Naive thymus-derived CD4-positive, alpha-beta T cell (primary cell): ENCODE measurements at regions of chr12 and their contacts with region 1.

Region 1: DNA sequence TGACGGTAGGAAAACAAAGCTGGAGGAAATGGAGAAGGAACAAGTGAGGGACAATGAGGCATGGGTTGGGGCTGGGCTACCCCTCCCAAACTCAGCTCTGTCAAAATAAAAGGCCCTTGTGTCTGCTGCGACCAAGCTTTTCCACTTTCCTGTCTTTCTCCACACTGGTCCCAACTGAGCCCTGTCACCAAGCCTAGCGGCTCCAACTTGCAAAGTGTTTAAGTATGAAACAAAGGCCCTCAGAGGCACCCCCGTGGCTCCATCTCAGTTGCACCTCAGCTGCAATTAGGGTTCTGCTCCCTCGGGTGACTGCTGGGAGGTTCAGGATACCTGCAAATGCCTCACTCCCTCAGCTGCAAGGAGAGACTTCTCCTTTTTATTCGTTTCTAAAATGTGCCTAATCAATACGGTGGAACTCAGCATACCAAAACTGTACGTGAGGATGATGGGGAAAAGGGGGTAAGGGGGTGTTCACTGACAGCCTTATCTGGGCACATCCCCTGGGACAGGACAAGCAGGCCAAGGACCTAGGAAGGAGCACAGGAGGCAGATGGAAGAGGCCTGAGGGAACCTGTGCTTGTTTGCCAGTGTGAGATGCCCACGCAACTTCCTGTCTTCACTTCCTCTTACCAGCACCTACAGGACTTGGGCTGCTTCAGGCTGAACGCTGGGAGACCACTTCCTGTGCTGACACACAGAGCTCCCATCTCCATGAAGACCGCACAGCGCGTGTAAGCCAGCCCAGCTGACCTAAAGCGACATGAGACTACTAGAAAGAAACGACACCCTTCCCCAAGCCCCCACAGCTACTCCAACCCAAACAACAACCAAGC is 8.9 kb downstream of the VAMP1 start:
- DNase-seq: peak; percentile 41 to 91 (median 87)
- ATAC-seq: peak; percentile 93
- H3K4me3 ChIP-seq: peak overlapping the region; percentile 54
- H3K4me3 Mint-ChIP-seq: peak overlapping the region; percentile 74 to 89 (median 85)
- H3K27ac ChIP-seq: peak overlapping the region; percentile 93
- H3K27ac Mint-ChIP-seq: peak overlapping the region; percentile 95 to 99 (median 98)
- H3K4me1 ChIP-seq: peaks cover 59 to 81% of the 10 kb centered on the region in 2 donors
- H3K4me1 Mint-ChIP-seq: peaks cover 66 to 95% (median 87%) of the 10 kb centered on the region in 7 donors
- H3K27me3 ChIP-seq: no peaks in the 10 kb centered on the region
- H3K27me3 Mint-ChIP-seq: no peaks in the 10 kb centered on the region

Region 2: DNA sequence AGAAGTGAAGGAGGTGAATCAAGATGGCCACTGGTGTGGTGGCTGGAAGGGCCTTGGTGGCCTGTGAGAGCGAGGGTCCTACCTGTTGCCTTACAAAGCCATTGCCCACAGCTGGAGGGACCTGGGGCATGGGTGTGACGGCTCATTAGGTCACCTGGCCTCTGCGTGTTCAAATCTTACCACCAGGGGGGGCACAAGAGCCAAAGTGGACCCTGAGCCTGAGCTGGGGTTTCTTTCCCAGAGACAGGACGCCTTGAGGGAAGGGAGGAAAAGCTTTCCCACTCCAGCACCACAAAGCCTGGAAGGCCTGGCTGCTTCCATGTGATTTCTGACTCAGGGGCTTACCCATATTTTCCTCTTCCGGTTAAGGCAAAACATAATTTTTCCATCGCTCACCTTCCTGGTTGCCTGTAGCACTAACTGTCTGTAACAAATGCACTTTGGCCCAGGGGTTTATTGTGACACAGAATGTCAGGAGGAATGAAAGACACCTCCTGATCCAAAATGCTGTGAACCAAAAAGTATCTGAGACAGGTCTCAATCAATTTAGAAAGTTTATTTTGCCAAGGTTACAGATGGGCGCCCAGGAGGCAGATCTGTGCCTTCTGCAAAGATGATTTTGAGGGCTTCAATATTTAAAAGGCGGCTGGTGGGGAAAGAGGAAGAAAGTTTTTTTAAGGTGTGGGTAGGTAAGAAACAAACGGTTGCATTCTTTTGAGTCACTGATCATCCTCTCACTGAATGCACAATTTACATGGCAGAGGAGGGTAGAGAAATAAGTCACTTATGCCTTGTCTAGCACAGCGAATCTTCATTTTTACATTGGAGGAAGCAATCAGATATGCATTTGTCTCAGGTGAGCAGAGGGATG is 265.7 kb before region 1 on chr12:
- CTCF ChIA-PET with region 1: no interaction called
- POLR2A ChIA-PET with region 1: no interaction called
- intact Hi-C with region 1: no loop called
- DNase-seq: peak; percentile 42 to 80 (median 64)
- ATAC-seq: peak; percentile 75
- H3K4me3 ChIP-seq: no peak overlapping the region
- H3K4me3 Mint-ChIP-seq: no peak overlapping the region
- H3K27ac ChIP-seq: no peak overlapping the region
- H3K27ac Mint-ChIP-seq: peak overlapping the region in 3 of 9 donors; percentile 16 to 50 (median 19)
- H3K4me1 ChIP-seq: no peaks in the 10 kb centered on the region
- H3K4me1 Mint-ChIP-seq: peaks cover 5 to 21% (median 9%) of the 10 kb centered on the region in 7 donors
- H3K27me3 ChIP-seq: peaks cover 0 to 3% of the 10 kb centered on the region in 2 donors
- H3K27me3 Mint-ChIP-seq: peaks cover 0 to 37% (median under 1%) of the 10 kb centered on the region in 5 donors

Region 3: GRCh38 chr12:6341417-6342139 is 120.0 kb before region 1 on chr12 and contains the start of gene TNFRSF1A:
- CTCF ChIA-PET with region 1: interaction called, 47 read pairs
- POLR2A ChIA-PET with region 1: interaction called, 31 read pairs
- intact Hi-C with region 1: no loop called
- DNase-seq: peak in 7 of 9 donors; percentile 45 to 66 (median 54)
- ATAC-seq: peak; percentile 60
- H3K4me3 ChIP-seq: peak within 1 kb of the TSS; percentile 88
- H3K4me3 Mint-ChIP-seq: no peak within 1 kb of the TSS
- H3K27ac ChIP-seq: peak within 1 kb of the TSS; percentile 92
- H3K27ac Mint-ChIP-seq: peak within 1 kb of the TSS in 3 of 9 donors; percentile 95 to 97 (median 95)
- H3K4me1 ChIP-seq: peaks cover 54 to 56% of the 10 kb centered on the region in 2 donors
- H3K4me1 Mint-ChIP-seq: peaks cover 32 to 43% (median 39%) of the 10 kb centered on the region in 7 donors
- H3K27me3 ChIP-seq: no peaks in the 10 kb centered on the region
- H3K27me3 Mint-ChIP-seq: no peaks in the 10 kb centered on the region
- total RNA-seq, gene TNFRSF1A: 40.9 to 99.4 (median 67.3) TPM

Region 4: GRCh38 chr12:6434205-6435140 is 27.1 kb before region 1 on chr12:
- CTCF ChIA-PET with region 1: interaction called, 14 read pairs
- POLR2A ChIA-PET with region 1: interaction called, 726 read pairs
- intact Hi-C with region 1: no loop called
- DNase-seq: peak in 7 of 9 donors; percentile 41 to 60 (median 56)
- ATAC-seq: peak; percentile 80
- H3K4me3 ChIP-seq: peak overlapping the region; percentile 30
- H3K4me3 Mint-ChIP-seq: peak overlapping the region; percentile 55 to 85 (median 76)
- H3K27ac ChIP-seq: peak overlapping the region; percentile 68
- H3K27ac Mint-ChIP-seq: peak overlapping the region; percentile 90 to 98 (median 92)
- H3K4me1 ChIP-seq: peaks cover 18 to 30% of the 10 kb centered on the region in 2 donors
- H3K4me1 Mint-ChIP-seq: peaks cover 24 to 59% (median 53%) of the 10 kb centered on the region in 7 donors
- H3K27me3 ChIP-seq: no peaks in the 10 kb centered on the region
- H3K27me3 Mint-ChIP-seq: no peaks in the 10 kb centered on the region

Region 5: GRCh38 chr12:6443361-6443983 is 18.1 kb before region 1 on chr12:
- CTCF ChIA-PET with region 1: interaction called, 46 read pairs
- POLR2A ChIA-PET with region 1: interaction called, 726 read pairs
- intact Hi-C with region 1: loop called (anchors 1 to 2 kb)
- DNase-seq: no peak
- ATAC-seq: no peak
- H3K4me3 ChIP-seq: peak overlapping the region; percentile 19
- H3K4me3 Mint-ChIP-seq: peak overlapping the region; percentile 95 to 100 (median 100)
- H3K27ac ChIP-seq: peak overlapping the region; percentile 87
- H3K27ac Mint-ChIP-seq: peak overlapping the region; percentile 92 to 100 (median 95)
- H3K4me1 ChIP-seq: peaks cover 25 to 32% of the 10 kb centered on the region in 2 donors
- H3K4me1 Mint-ChIP-seq: peaks cover 22 to 63% (median 53%) of the 10 kb centered on the region in 7 donors
- H3K27me3 ChIP-seq: no peaks in the 10 kb centered on the region
- H3K27me3 Mint-ChIP-seq: no peaks in the 10 kb centered on the region

Region 6: DNA sequence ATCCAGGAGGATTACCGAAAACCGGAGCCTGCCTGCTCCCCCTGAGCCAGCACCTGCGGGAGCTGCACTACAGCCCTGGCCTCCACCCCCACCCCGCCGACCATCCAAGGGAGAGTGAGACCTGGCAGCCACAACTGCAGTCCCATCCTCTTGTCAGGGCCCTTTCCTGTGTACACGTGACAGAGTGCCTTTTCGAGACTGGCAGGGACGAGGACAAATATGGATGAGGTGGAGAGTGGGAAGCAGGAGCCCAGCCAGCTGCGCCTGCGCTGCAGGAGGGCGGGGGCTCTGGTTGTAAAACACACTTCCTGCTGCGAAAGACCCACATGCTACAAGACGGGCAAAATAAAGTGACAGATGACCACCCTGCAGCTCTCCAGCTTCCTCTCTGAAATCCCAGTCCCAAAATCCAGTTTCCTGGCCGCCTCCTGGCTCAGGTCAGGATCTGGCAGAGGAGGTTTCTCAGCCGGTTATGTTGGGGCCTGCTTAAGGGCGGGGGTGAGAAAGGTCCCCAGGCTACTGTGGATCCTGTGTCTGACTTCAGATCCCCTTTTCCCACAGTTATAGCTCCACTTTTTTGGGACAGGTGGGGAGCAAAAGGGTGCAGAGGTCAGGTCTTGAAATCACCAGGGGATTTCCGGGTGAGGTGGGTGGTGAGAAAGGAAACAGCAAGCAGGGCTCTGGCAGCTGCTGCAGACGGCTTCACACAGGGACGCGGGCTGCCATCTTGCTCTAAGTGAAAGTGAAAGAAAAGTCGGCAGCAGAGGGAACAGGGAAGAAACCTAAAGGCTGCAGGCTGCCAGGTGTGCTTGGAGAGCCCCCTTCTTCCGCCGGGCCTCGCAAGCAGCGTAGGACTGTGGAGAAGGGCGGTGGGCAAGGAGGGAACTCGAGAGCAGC is 10.0 kb before region 1 on chr12 and contains the start of gene TAPBPL:
- CTCF ChIA-PET with region 1: interaction called, 46 read pairs
- POLR2A ChIA-PET with region 1: interaction called, 726 read pairs
- intact Hi-C with region 1: loop called (anchors 1 kb)
- DNase-seq: peak; percentile 49 to 93 (median 87)
- ATAC-seq: peak; percentile 94
- H3K4me3 ChIP-seq: peak within 1 kb of the TSS; percentile 83
- H3K4me3 Mint-ChIP-seq: peak within 1 kb of the TSS; percentile 96 to 100 (median 98)
- H3K27ac ChIP-seq: peak within 1 kb of the TSS; percentile 96
- H3K27ac Mint-ChIP-seq: peak within 1 kb of the TSS; percentile 96 to 100 (median 99)
- H3K4me1 ChIP-seq: peaks cover 50% of the 10 kb centered on the region in 2 donors
- H3K4me1 Mint-ChIP-seq: peaks cover 50 to 84% (median 73%) of the 10 kb centered on the region in 7 donors
- H3K27me3 ChIP-seq: no peaks in the 10 kb centered on the region
- H3K27me3 Mint-ChIP-seq: no peaks in the 10 kb centered on the region
- total RNA-seq, gene TAPBPL: 23.0 to 65.4 (median 52.9) TPM